ENCODE measurements at regions of chr19 and their contacts with region 1.

Region 1: DNA sequence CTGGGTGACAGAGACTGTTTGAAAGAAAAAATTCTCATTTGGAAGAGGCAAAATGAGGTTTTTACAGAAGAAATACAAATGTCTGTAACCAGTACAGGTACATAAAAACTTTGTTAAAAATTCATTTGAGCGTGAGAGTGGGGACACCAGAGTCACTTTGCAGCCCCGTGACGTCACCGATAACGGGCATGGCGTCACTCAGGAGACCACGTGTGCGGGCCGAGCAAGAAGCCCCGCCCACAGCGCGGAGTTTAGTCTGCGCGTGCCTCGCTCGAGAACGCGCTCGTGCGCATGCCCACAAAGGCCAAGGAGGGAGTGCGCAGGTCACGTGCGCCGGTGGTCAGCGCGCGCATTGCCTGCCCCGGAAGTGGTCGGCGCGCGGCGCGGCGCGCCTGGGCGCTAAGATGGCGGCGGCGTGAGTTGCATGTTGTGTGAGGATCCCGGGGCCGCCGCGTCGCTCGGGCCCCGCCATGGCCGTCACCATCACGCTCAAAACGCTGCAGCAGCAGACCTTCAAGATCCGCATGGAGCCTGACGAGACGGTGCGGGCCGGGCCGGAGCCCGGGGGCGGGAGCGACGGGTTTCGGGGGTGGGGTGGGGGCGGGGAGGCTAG is at the start of gene RAD23A:
- DNase-seq: peak; percentile 100
- ATAC-seq: peak; percentile 88
- H3K4me3 ChIP-seq: peak within 1 kb of the TSS; percentile 55 to 90 (median 61)
- H3K4me3 Mint-ChIP-seq: peak within 1 kb of the TSS; percentile 95
- H3K27ac ChIP-seq: peak within 1 kb of the TSS; percentile 68 to 86
- H3K27ac Mint-ChIP-seq: peak within 1 kb of the TSS; percentile 99
- H3K4me1 ChIP-seq: peaks cover 20 to 44% of the 10 kb centered on the region in 2 donors
- H3K4me1 Mint-ChIP-seq: peaks cover 48% of the 10 kb centered on the region
- H3K27me3 ChIP-seq: no peaks in the 10 kb centered on the region
- H3K27me3 Mint-ChIP-seq: no peaks in the 10 kb centered on the region
- CTCF ChIP-seq: no peak
- total RNA-seq, gene RAD23A: 89.0 and 100 TPM in 2 replicates

Region 2: GRCh38 chr19:12759686-12760085 is 185.9 kb before region 1 on chr19:
- CTCF ChIA-PET with region 1: no interaction called
- POLR2A ChIA-PET with region 1: no interaction called
- intact Hi-C with region 1: no loop called
- DNase-seq: no peak
- ATAC-seq: no peak
- H3K4me3 ChIP-seq: no peak overlapping the region
- H3K4me3 Mint-ChIP-seq: no peak overlapping the region
- H3K27ac ChIP-seq: no peak overlapping the region
- H3K27ac Mint-ChIP-seq: no peak overlapping the region
- H3K4me1 ChIP-seq: peaks cover 7 to 8% of the 10 kb centered on the region in 2 donors
- H3K4me1 Mint-ChIP-seq: peaks cover 11% of the 10 kb centered on the region
- H3K27me3 ChIP-seq: peaks cover 0 to 22% (median 5%) of the 10 kb centered on the region in 4 experiments
- H3K27me3 Mint-ChIP-seq: peaks cover 15% of the 10 kb centered on the region
- CTCF ChIP-seq: no peak

Region 3: GRCh38 chr19:12782229-12783028 is 163.2 kb before region 1 on chr19:
- CTCF ChIA-PET with region 1: no interaction called
- POLR2A ChIA-PET with region 1: no interaction called
- intact Hi-C with region 1: no loop called
- DNase-seq: peak; percentile 99
- ATAC-seq: peak; percentile 58
- H3K4me3 ChIP-seq: peak overlapping the region in 4 of 5 experiments; percentile 55 to 64 (median 57)
- H3K4me3 Mint-ChIP-seq: peak overlapping the region; percentile 89
- H3K27ac ChIP-seq: peak overlapping the region; percentile 92 to 97
- H3K27ac Mint-ChIP-seq: no peak overlapping the region
- H3K4me1 ChIP-seq: peaks cover 67 to 81% of the 10 kb centered on the region in 2 donors
- H3K4me1 Mint-ChIP-seq: peaks cover 47% of the 10 kb centered on the region
- H3K27me3 ChIP-seq: no peaks in the 10 kb centered on the region
- H3K27me3 Mint-ChIP-seq: no peaks in the 10 kb centered on the region
- CTCF ChIP-seq: no peak

Region 4: DNA sequence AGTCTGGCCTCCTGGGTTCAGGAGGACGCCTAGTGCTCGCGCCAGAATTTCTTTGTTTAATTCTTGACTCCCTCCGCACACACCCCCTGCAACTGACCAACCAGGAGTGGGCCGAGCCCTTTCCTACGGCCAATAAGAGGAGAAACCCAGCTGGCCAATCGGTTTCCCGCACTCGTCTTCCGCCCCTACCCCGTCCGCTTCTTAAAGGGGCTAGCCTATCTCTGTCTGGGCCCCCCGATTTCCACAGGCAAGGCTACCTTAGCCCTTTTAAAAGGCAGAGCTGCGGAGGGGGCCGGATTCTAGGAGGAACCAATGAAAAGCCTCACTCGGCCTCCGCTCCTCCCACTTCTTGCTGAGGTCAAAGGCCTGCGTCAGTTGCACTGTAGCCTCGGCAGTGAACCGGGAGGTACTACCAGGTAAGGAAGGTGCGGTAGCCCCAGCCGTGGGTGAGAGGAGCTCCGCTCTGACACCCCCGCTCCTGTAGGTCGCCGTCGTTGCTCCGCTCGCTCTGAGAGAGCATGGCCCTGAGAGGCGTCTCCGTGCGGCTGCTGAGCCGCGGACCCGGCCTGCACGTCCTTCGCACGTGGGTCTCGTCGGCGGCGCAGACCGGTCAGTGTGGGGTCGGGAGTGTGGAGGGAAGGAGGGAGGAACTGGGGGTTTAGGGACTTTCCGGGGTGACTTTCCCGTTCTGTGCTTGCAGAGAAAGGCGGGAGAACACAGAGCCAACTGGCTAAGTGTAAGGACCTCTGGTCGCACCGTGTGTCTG is 54.6 kb before region 1 on chr19 and contains the start of gene GCDH:
- CTCF ChIA-PET with region 1: no interaction called
- POLR2A ChIA-PET with region 1: interaction called, 3 read pairs
- intact Hi-C with region 1: loop called (anchors 1 kb)
- DNase-seq: peak; percentile 98
- ATAC-seq: peak; percentile 91
- H3K4me3 ChIP-seq: peak within 1 kb of the TSS; percentile 51 to 92 (median 78)
- H3K4me3 Mint-ChIP-seq: peak within 1 kb of the TSS; percentile 99
- H3K27ac ChIP-seq: peak within 1 kb of the TSS; percentile 80 to 83
- H3K27ac Mint-ChIP-seq: peak within 1 kb of the TSS; percentile 95
- H3K4me1 ChIP-seq: peaks cover 15 to 20% of the 10 kb centered on the region in 2 donors
- H3K4me1 Mint-ChIP-seq: peaks cover 31% of the 10 kb centered on the region
- H3K27me3 ChIP-seq: no peaks in the 10 kb centered on the region
- H3K27me3 Mint-ChIP-seq: no peaks in the 10 kb centered on the region
- CTCF ChIP-seq: no peak
- total RNA-seq, gene GCDH: 61.2 and 63.2 TPM in 2 replicates

Region 5: GRCh38 chr19:12956446-12957388 is 11.1 kb after region 1 on chr19 and contains the start of gene GADD45GIP1:
- CTCF ChIA-PET with region 1: interaction called, 3 read pairs
- POLR2A ChIA-PET with region 1: no interaction called
- intact Hi-C with region 1: loop called (anchors 1 kb)
- DNase-seq: peak; percentile 86
- ATAC-seq: peak; percentile 98
- H3K4me3 ChIP-seq: peak within 1 kb of the TSS; percentile 60 to 83 (median 65)
- H3K4me3 Mint-ChIP-seq: peak within 1 kb of the TSS; percentile 91
- H3K27ac ChIP-seq: peak within 1 kb of the TSS; percentile 75 to 90
- H3K27ac Mint-ChIP-seq: peak within 1 kb of the TSS; percentile 95
- H3K4me1 ChIP-seq: peaks cover 21 to 36% of the 10 kb centered on the region in 2 donors
- H3K4me1 Mint-ChIP-seq: peaks cover 30% of the 10 kb centered on the region
- H3K27me3 ChIP-seq: no peaks in the 10 kb centered on the region
- H3K27me3 Mint-ChIP-seq: peaks cover 2% of the 10 kb centered on the region
- CTCF ChIP-seq: no peak
- total RNA-seq, gene GADD45GIP1: 11.7 and 12.6 TPM in 2 replicates

Region 6: GRCh38 chr19:13033819-13034611 is 88.4 kb after region 1 on chr19:
- CTCF ChIA-PET with region 1: no interaction called
- POLR2A ChIA-PET with region 1: no interaction called
- intact Hi-C with region 1: no loop called
- DNase-seq: peak; percentile 56
- ATAC-seq: peak; percentile 83
- H3K4me3 ChIP-seq: no peak overlapping the region
- H3K4me3 Mint-ChIP-seq: no peak overlapping the region
- H3K27ac ChIP-seq: no peak overlapping the region
- H3K27ac Mint-ChIP-seq: no peak overlapping the region
- H3K4me1 ChIP-seq: no peaks in the 10 kb centered on the region
- H3K4me1 Mint-ChIP-seq: peaks cover 1% of the 10 kb centered on the region
- H3K27me3 ChIP-seq: peaks cover 0 to 10% (median 4%) of the 10 kb centered on the region in 4 experiments
- H3K27me3 Mint-ChIP-seq: peaks cover 17% of the 10 kb centered on the region
- CTCF ChIP-seq: peak; percentile 73

Measured in B cell (primary cell).